PC-3 (cell line): ENCODE measurements at regions of chr11 and their contacts with region 1.

Region 1: GRCh38 chr11:94623120-94623735 is 56.1 kb downstream of the PIWIL4 start:
- DNase-seq: peak; percentile 95
- ATAC-seq: peak; percentile 96
- H3K4me3 ChIP-seq: no peak overlapping the region
- H3K27ac ChIP-seq: no peak overlapping the region
- H3K4me1 ChIP-seq: peaks cover 4% of the 10 kb centered on the region; the same call in 1 of the 2 replicates
- H3K27me3 ChIP-seq: no peaks in the 10 kb centered on the region
- CTCF ChIP-seq: peak; percentile 99

Region 2: DNA sequence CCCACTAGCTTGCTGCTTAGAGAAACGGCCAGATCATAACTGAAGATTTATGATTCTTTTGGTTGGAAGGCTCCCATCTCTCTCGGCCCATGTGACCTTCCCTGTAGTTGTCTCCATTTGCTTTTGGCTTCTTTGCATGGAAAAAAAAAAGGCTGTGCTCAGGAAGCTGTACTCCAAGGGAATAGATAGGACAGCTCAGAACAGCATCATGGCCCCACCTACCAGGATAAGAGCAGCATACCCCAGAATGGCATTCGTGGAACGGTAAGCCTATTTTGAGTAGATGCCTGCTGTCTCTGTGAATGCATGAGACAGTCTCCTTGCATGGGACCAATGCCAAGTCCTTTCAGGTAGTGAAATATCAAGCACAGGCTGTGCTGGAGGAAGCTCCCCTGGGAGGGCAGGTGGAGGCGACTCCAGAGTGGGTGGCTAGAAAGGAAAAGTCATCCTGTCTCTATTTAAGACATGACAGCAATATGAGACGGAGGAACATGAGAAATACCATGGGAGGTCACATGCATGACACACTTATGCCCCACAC is 50.8 kb after region 1 on chr11:
- CTCF ChIA-PET with region 1: interaction called, 6 read pairs
- POLR2A ChIA-PET with region 1: no interaction called
- intact Hi-C with region 1: loop called (anchors 10 kb)
- DNase-seq: peak; percentile 75
- ATAC-seq: no peak
- H3K4me3 ChIP-seq: no peak overlapping the region
- H3K27ac ChIP-seq: 0 out of 2 replicates have a peak overlapping the region, but pooled peaks have one; percentile 86
- H3K4me1 ChIP-seq: peaks cover 64% of the 10 kb centered on the region
- H3K27me3 ChIP-seq: no peaks in the 10 kb centered on the region
- CTCF ChIP-seq: no peak

Region 3: GRCh38 chr11:94741022-94741679 is 117.9 kb after region 1 on chr11:
- CTCF ChIA-PET with region 1: interaction called, 17 read pairs
- POLR2A ChIA-PET with region 1: no interaction called
- intact Hi-C with region 1: loop called (anchors 1 kb)
- DNase-seq: peak; percentile 87
- ATAC-seq: peak; percentile 46
- H3K4me3 ChIP-seq: peak overlapping the region; percentile 76
- H3K27ac ChIP-seq: peak overlapping the region; percentile 6; the same call in 1 of the 2 replicates
- H3K4me1 ChIP-seq: peaks cover 51% of the 10 kb centered on the region
- H3K27me3 ChIP-seq: no peaks in the 10 kb centered on the region
- CTCF ChIP-seq: peak; percentile 65

Region 4: DNA sequence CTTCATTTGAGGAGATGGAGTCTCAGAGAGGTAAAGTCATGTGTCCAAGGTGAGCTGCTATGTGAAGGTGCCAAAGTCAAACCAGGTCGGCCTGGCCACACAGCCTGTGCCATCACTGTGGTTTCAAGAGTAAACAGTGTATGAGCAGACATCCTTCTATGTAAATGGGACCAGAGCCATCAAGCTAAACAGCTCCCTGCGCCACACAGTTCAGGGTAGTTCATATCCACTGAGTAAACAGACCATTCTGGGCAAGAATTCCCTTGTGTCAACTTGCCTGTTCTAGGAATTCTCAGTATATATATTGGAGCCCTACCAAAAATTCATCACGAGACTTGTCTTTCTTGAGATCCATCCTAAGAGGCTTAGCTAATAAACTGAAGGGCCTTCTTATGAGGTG is 222.4 kb after region 1 on chr11:
- CTCF ChIA-PET with region 1: interaction called, 10 read pairs
- POLR2A ChIA-PET with region 1: no interaction called
- intact Hi-C with region 1: no loop called
- DNase-seq: peak; percentile 93
- ATAC-seq: peak; percentile 100
- H3K4me3 ChIP-seq: no peak overlapping the region
- H3K27ac ChIP-seq: 0 out of 2 replicates have a peak overlapping the region, but pooled peaks have one; percentile 3
- H3K4me1 ChIP-seq: peaks cover 16% of the 10 kb centered on the region
- H3K27me3 ChIP-seq: no peaks in the 10 kb centered on the region
- CTCF ChIP-seq: no peak

Region 5: GRCh38 chr11:94897330-94897768 is 274.1 kb after region 1 on chr11:
- CTCF ChIA-PET with region 1: interaction called, 8 read pairs
- POLR2A ChIA-PET with region 1: no interaction called
- intact Hi-C with region 1: loop called (anchors 1 kb)
- DNase-seq: peak; percentile 78
- ATAC-seq: peak; percentile 73
- H3K4me3 ChIP-seq: no peak overlapping the region
- H3K27ac ChIP-seq: no peak overlapping the region
- H3K4me1 ChIP-seq: peaks cover 8% of the 10 kb centered on the region; the same call in 1 of the 2 replicates
- H3K27me3 ChIP-seq: no peaks in the 10 kb centered on the region
- CTCF ChIP-seq: peak; percentile 98

Region 6: GRCh38 chr11:95150946-95151684 is 527.9 kb after region 1 on chr11:
- CTCF ChIA-PET with region 1: no interaction called
- POLR2A ChIA-PET with region 1: no interaction called
- intact Hi-C with region 1: loop called (anchors 1 kb)
- DNase-seq: peak; percentile 98
- ATAC-seq: peak; percentile 68
- H3K4me3 ChIP-seq: peak overlapping the region; percentile 71
- H3K27ac ChIP-seq: peak overlapping the region; percentile 60
- H3K4me1 ChIP-seq: peaks cover 44% of the 10 kb centered on the region
- H3K27me3 ChIP-seq: no peaks in the 10 kb centered on the region
- CTCF ChIP-seq: peak; percentile 60